Left ventricle myocardium inferior (tissue), 1 donor: ENCODE measurements at regions of chr1 and their contacts with region 1.

Region 1: DNA sequence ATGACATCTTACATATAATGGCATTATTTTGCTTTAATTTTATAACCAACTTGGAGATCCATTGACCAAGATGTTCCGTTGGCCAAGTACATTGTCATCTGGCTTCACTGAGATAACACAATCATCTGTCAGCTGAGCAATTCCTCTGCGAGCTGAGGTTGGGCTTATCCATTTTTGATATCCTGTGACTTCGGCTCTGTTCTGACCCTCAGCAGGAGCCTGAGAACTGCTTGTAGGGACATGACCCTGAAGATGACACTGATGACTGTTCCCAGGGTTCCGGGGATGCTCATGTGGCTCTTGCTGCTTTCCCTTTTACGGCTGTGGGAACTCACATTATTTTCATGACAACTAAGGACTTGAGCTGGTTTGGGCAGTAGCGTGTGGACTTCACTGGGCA is 51.2 kb downstream of the TLR5 start:
- DNase-seq: no peak
- H3K4me3 ChIP-seq: no peak overlapping the region
- H3K27ac ChIP-seq: peak overlapping the region; percentile 70
- H3K4me1 ChIP-seq: peaks cover 8% of the 10 kb centered on the region
- H3K27me3 ChIP-seq: no peaks in the 10 kb centered on the region
- CTCF ChIP-seq: no peak

Region 2: GRCh38 chr1:222736972-222737371 is 354.9 kb before region 1 on chr1 and contains the start of gene FAM177B:
- intact Hi-C with region 1: loop called (anchors 5 kb)
- DNase-seq: no peak
- H3K4me3 ChIP-seq: no peak within 1 kb of the TSS
- H3K27ac ChIP-seq: no peak within 1 kb of the TSS
- H3K4me1 ChIP-seq: no peaks in the 10 kb centered on the region
- H3K27me3 ChIP-seq: no peaks in the 10 kb centered on the region
- CTCF ChIP-seq: no peak
- total RNA-seq, gene FAM177B: not detected

Region 3: GRCh38 chr1:223153177-223154119 is 61.6 kb after region 1 on chr1:
- intact Hi-C with region 1: no loop called
- DNase-seq: no peak
- H3K4me3 ChIP-seq: no peak overlapping the region
- H3K27ac ChIP-seq: peak overlapping the region; percentile 31
- H3K4me1 ChIP-seq: peaks cover 13% of the 10 kb centered on the region
- H3K27me3 ChIP-seq: peaks cover 11% of the 10 kb centered on the region
- CTCF ChIP-seq: no peak